Head of caudate nucleus (tissue), 42 donors: ENCODE measurements at regions of chr4 and their contacts with region 1.

Region 1: DNA sequence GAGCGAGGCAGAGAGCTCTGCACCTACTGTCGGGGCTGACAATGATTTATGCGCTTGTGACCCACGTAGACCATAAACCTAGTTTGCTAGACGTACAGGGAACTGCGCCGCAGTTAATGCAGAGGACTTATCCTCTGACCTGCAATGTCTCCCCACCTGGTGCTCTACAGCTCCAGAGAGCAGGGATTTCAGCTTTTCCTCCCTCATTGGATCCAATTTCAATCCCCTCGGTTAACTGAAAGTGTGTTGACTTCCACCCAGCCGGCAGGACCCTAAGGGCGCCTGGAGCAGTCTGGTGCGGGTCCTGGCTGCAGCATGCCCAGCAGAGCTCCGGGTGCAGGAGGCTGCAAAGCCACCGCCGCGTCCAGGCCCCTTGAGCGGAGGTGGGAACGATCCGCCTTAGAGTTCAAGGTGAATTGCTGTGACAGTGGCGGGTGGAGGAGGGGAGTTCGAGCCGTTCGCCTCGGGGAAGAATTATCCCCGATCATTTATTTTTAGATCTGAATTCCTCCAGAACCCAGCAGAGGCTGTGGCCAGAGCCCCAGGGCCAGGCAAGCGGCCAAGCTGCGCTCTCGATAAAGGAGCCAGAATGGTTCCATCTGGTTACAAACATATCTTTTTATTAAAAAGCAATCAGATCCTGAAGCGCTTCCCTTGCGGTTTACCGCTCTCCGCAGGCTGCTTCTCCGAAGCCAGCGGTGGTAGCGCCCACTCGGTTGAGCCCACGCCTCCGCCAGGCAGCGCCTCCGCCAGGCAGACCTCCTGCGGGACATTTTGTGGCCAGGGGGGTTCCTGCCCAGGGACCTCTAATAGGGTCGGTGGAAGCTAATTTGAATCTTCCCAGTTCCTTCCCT is 66.0 kb downstream of the FBXO8 start:
- DNase-seq: no peak

Region 2: GRCh38 chr4:173529477-173530325 is 687.8 kb before region 1 on chr4 and contains the start of gene HAND2:
- intact Hi-C with region 1: loop called (anchors 10 kb)
- DNase-seq: no peak

Region 3: DNA sequence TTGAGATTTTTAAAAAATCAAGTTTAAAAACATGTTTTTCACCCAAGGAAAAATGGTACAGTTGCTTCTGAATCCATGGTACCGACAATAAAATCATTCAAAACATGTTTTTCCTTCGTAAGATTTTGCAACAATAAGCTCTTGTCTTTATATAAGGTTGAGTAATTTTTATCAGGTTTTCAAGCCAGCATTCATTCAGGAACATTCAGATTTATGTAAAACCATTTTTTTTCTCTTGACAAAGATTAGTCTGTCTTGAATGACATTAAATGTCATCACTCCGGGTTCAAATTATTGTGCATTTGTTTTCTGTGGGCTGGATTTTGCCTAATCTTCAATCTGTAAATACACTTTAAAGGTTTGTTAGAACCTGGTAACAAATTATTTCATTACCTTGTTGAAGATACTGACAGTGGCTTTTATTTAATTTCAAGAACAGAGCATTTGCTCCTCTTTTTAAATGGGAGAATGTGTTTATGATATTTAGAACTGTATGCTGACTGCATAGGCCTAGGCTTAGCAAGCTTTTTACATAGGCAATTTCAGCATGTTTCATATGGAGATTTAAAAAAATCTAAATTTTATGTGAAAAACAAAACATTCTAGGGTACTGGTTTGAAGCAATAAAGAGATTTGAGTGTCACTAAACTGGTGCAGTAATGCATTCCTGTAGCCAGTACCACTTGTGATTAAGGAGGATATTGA is 351.0 kb before region 1 on chr4:
- intact Hi-C with region 1: no loop called
- DNase-seq: no peak

Region 4: GRCh38 chr4:174173360-174173759 is 44.1 kb before region 1 on chr4:
- intact Hi-C with region 1: no loop called
- DNase-seq: no peak